ENCODE measurements at regions of chr11 and their contacts with region 1.

Region 1: GRCh38 chr11:75554258-75555022 is 7.6 kb upstream of the SERPINH1 start:
- DNase-seq: no peak
- H3K4me3 Mint-ChIP-seq: no peak overlapping the region
- H3K27ac Mint-ChIP-seq: no peak overlapping the region
- H3K4me1 Mint-ChIP-seq: no peaks in the 10 kb centered on the region
- H3K27me3 Mint-ChIP-seq: peaks cover 2% of the 10 kb centered on the region

Region 2: DNA sequence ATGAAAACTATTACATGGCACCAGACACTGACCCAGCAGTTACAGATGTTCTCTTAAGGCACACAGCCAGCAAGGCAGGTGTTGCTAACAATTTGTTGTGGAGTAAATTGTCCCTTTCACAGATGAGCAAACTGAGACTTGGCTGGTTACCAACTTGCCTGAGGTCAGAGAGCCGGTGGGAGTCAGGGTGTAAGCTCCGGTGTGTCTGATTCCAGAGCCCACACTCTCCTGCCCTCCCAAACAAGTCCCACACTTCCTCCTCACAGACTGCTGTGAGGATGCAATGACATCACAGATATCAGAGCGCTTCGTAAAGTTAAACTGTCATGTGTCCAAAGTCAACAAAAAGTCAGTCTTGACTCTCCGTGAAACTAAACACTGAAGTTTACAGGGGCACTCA is 41.2 kb before region 1 on chr11:
- CTCF ChIA-PET with region 1: no interaction called
- POLR2A ChIA-PET with region 1: no interaction called
- DNase-seq: no peak
- H3K4me3 Mint-ChIP-seq: no peak overlapping the region
- H3K27ac Mint-ChIP-seq: peak overlapping the region; percentile 21
- H3K4me1 Mint-ChIP-seq: peaks cover 41% of the 10 kb centered on the region
- H3K27me3 Mint-ChIP-seq: no peaks in the 10 kb centered on the region

Region 3: GRCh38 chr11:75532200-75533048 is 22.0 kb before region 1 on chr11:
- CTCF ChIA-PET with region 1: interaction called, 11 read pairs
- POLR2A ChIA-PET with region 1: no interaction called
- DNase-seq: peak; percentile 89
- H3K4me3 Mint-ChIP-seq: peak overlapping the region; percentile 10
- H3K27ac Mint-ChIP-seq: peak overlapping the region; percentile 79
- H3K4me1 Mint-ChIP-seq: peaks cover 61% of the 10 kb centered on the region
- H3K27me3 Mint-ChIP-seq: no peaks in the 10 kb centered on the region

Region 4: DNA sequence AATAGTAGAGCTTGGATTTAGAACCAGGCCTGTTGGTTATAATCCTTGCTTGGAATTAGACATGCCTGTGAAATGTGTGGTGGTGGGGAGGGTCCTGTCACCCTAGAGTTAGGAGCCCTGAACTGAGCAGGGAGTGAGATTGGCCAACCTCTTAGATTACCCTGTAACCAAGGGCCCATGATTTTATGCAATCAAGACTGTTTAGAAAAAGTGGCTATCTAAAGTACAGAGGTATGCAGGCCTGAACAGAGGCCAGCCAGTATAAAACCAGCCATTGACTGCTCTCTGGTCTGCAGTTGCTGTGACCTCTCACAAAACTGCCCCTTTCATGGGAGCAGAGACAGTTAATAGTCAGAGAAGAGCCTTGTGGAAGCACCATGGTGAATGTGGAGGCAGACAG is 43.8 kb after region 1 on chr11:
- CTCF ChIA-PET with region 1: no interaction called
- POLR2A ChIA-PET with region 1: no interaction called
- DNase-seq: no peak
- H3K4me3 Mint-ChIP-seq: no peak overlapping the region
- H3K27ac Mint-ChIP-seq: no peak overlapping the region
- H3K4me1 Mint-ChIP-seq: peaks cover 2% of the 10 kb centered on the region
- H3K27me3 Mint-ChIP-seq: peaks cover 9% of the 10 kb centered on the region